Activated CD4-positive, alpha-beta T cell treated with anti-CD3 and anti-CD28 coated beads, Interleukin-2, amount 10 ng/mL, durations not matched to agents 24 days and 14 days (primary cell): ENCODE measurements at regions of chr10 and their contacts with region 1.

Region 1: GRCh38 chr10:43138021-43138756 is at the start of gene CSGALNACT2:
- DNase-seq: peak; percentile 97
- H3K4me3 Mint-ChIP-seq: peak within 1 kb of the TSS; percentile 98
- H3K27ac Mint-ChIP-seq: peak within 1 kb of the TSS; percentile 99
- H3K4me1 Mint-ChIP-seq: peaks cover 59% of the 10 kb centered on the region
- H3K27me3 Mint-ChIP-seq: no peaks in the 10 kb centered on the region
- total RNA-seq, gene CSGALNACT2: 24.7 and 25.9 TPM in 2 replicates

Region 2: DNA sequence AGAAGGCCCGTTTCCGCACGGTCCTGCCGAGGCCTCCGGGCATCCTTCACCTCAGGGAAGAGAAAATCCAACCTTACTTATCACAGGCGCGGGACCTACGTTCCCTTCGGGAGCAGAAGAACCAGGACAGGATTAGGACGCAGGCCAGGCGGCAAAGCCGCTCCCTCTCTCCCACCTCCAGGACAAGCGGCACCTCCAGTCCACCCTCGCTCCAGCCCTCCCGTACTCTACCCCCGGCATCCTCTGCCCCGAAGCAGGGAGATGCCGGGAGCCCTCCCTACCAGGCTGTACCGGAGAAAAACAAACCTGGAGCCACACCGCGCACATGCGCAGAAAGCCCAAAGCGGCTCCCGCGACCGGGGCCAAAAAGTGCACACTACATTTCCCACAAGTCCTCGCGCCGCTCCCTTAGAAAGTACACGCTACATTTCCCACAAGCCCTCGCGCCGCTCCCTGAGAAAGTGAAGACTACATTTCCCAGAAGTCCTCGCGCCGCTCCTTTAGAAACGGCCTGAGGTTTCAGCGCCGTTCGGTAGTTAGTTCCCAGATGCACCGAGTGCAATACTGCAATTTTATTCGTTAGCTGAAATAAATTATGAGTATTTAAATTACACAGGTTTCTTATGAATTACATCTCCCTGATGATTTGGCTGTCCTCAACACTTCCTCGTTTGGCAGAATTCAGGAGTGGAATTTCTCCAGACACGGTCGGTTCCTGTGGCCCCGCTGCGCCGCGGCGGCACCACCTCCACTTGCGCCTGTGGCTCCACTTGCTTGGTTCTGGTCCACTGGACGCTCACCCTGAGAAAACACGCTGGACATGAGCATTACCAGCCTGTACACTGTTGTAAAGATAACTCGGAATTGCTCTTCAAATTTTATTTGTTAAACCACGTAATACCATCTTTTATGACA is 585.4 kb before region 1 on chr10:
- intact Hi-C with region 1: loop called (anchors 10 kb)
- DNase-seq: peak; percentile 98
- H3K4me3 Mint-ChIP-seq: peak overlapping the region; percentile 94
- H3K27ac Mint-ChIP-seq: peak overlapping the region; percentile 97
- H3K4me1 Mint-ChIP-seq: peaks cover 27% of the 10 kb centered on the region
- H3K27me3 Mint-ChIP-seq: no peaks in the 10 kb centered on the region

Region 3: GRCh38 chr10:42594246-42594650 is 543.9 kb before region 1 on chr10:
- intact Hi-C with region 1: no loop called
- DNase-seq: no peak
- H3K4me3 Mint-ChIP-seq: no peak overlapping the region
- H3K27ac Mint-ChIP-seq: no peak overlapping the region
- H3K4me1 Mint-ChIP-seq: no peaks in the 10 kb centered on the region
- H3K27me3 Mint-ChIP-seq: no peaks in the 10 kb centered on the region

Region 4: GRCh38 chr10:43105102-43105785 is 32.9 kb before region 1 on chr10:
- intact Hi-C with region 1: loop called (anchors 2 kb)
- DNase-seq: peak; percentile 95
- H3K4me3 Mint-ChIP-seq: peak overlapping the region; percentile 82
- H3K27ac Mint-ChIP-seq: peak overlapping the region; percentile 65
- H3K4me1 Mint-ChIP-seq: peaks cover 13% of the 10 kb centered on the region
- H3K27me3 Mint-ChIP-seq: peaks cover 20% of the 10 kb centered on the region

Region 5: GRCh38 chr10:43160046-43160918 is 22.1 kb after region 1 on chr10:
- intact Hi-C with region 1: loop called (anchors 1 kb)
- DNase-seq: no peak
- H3K4me3 Mint-ChIP-seq: peak overlapping the region; percentile 12
- H3K27ac Mint-ChIP-seq: peak overlapping the region; percentile 91
- H3K4me1 Mint-ChIP-seq: peaks cover 41% of the 10 kb centered on the region
- H3K27me3 Mint-ChIP-seq: no peaks in the 10 kb centered on the region

Region 6: GRCh38 chr10:43174969-43175368 is 36.8 kb after region 1 on chr10:
- intact Hi-C with region 1: no loop called
- DNase-seq: peak; percentile 40
- H3K4me3 Mint-ChIP-seq: no peak overlapping the region
- H3K27ac Mint-ChIP-seq: no peak overlapping the region
- H3K4me1 Mint-ChIP-seq: peaks cover 22% of the 10 kb centered on the region
- H3K27me3 Mint-ChIP-seq: no peaks in the 10 kb centered on the region

Region 7: DNA sequence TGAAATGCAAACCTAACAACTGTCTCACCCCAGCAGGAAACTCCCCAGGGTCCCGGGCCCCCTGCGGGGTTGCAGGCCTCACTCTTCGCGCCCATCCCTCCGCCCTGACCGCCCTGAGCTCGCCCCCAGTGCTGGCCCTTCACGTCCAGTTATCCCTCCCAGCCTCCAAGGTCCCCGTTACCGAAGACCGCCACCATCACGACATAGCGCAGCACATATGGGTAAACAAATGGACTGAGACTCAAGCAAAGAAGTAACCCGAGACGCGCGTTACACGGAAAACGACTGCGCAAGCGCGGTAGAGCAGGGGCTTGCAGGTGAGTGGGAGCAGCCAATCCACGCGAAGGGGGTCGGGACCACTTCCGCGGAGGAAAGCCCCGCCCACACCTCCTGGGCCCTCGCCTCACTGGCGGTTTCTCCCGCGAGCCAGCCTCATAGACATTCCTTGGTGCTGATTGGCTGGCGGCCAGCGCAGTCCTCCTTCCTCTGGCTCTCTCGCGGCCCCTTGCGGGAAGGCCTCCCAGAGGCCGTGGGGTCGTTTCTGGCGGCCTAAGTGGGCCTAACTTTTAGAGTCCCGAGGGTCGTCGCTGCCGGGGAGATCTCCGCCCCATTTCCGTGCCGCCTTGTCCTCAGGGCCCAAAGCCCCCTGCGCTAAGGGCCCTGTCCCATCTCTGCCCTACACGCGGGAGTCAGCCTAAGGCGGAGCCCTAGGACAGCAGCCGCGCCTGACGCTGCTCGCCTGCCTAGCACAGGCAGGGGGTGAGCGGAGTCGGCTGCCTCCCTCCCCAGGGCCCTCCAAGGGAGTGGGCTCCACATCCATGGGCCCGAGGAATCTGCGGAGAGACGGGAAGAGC is 224.0 kb after region 1 on chr10:
- intact Hi-C with region 1: loop called (anchors 2 kb)
- DNase-seq: peak; percentile 99
- H3K4me3 Mint-ChIP-seq: peak overlapping the region; percentile 99
- H3K27ac Mint-ChIP-seq: peak overlapping the region; percentile 99
- H3K4me1 Mint-ChIP-seq: peaks cover 25% of the 10 kb centered on the region
- H3K27me3 Mint-ChIP-seq: no peaks in the 10 kb centered on the region